GM23248 (cell line): ENCODE measurements at regions of chr3 and their contacts with region 1.

Region 1: GRCh38 chr3:53881691-53882593 is at the start of gene ACTR8:
- DNase-seq: peak; percentile 90
- H3K4me3 ChIP-seq: peak within 1 kb of the TSS; percentile 94
- H3K27ac ChIP-seq: peak within 1 kb of the TSS; percentile 76
- H3K4me1 ChIP-seq: peaks cover 12% of the 10 kb centered on the region
- H3K27me3 ChIP-seq: no peaks in the 10 kb centered on the region
- total RNA-seq, gene ACTR8: 33.0 and 41.0 TPM in 2 replicates

Region 2: GRCh38 chr3:53347261-53348064 is 534.5 kb before region 1 on chr3 and contains the start of gene DCP1A:
- in situ Hi-C with region 1: loop called (anchors 25 kb)
- DNase-seq: peak; percentile 99
- H3K4me3 ChIP-seq: peak within 1 kb of the TSS; percentile 98
- H3K27ac ChIP-seq: peak within 1 kb of the TSS; percentile 94
- H3K4me1 ChIP-seq: peaks cover 20% of the 10 kb centered on the region
- H3K27me3 ChIP-seq: no peaks in the 10 kb centered on the region
- total RNA-seq, gene DCP1A: 10.6 and 13.1 TPM in 2 replicates